ENCODE measurements at regions of chr11 and their contacts with region 1.

Region 1: GRCh38 chr11:74739546-74740270 is 8.5 kb upstream of the CHRDL2 start:
- DNase-seq: peak; percentile 50 to 68 (median 64)
- ATAC-seq: peak; percentile 95
- H3K4me3 ChIP-seq: no peak overlapping the region
- H3K27ac ChIP-seq: no peak overlapping the region
- H3K4me1 ChIP-seq: no peaks in the 10 kb centered on the region
- H3K27me3 ChIP-seq: no peaks in the 10 kb centered on the region
- CTCF ChIP-seq: peak; percentile 73 to 88 (median 79)
- POLR2A ChIP-seq: no peak

Region 2: GRCh38 chr11:74611369-74611861 is 128.3 kb before region 1 on chr11:
- intact Hi-C with region 1: no loop called
- DNase-seq: no peak
- ATAC-seq: peak; percentile 86
- H3K4me3 ChIP-seq: no peak overlapping the region
- H3K27ac ChIP-seq: peak overlapping the region in 2 of 4 donors; percentile 2 to 47
- H3K4me1 ChIP-seq: peaks cover 22% of the 10 kb centered on the region
- H3K27me3 ChIP-seq: no peaks in the 10 kb centered on the region
- CTCF ChIP-seq: peak; percentile 8 to 64 (median 54)
- POLR2A ChIP-seq: no peak

Region 3: GRCh38 chr11:74641289-74641688 is 98.4 kb before region 1 on chr11:
- intact Hi-C with region 1: loop called (anchors 10 kb)
- DNase-seq: peak in 1 of 4 donors; percentile 8
- ATAC-seq: no peak
- H3K4me3 ChIP-seq: no peak overlapping the region
- H3K27ac ChIP-seq: no peak overlapping the region
- H3K4me1 ChIP-seq: no peaks in the 10 kb centered on the region
- H3K27me3 ChIP-seq: no peaks in the 10 kb centered on the region
- CTCF ChIP-seq: no peak
- POLR2A ChIP-seq: no peak

Measured in body of pancreas (tissue), 4 donors.